ENCODE measurements at regions of chr12 and their contacts with region 1.

Region 1: DNA sequence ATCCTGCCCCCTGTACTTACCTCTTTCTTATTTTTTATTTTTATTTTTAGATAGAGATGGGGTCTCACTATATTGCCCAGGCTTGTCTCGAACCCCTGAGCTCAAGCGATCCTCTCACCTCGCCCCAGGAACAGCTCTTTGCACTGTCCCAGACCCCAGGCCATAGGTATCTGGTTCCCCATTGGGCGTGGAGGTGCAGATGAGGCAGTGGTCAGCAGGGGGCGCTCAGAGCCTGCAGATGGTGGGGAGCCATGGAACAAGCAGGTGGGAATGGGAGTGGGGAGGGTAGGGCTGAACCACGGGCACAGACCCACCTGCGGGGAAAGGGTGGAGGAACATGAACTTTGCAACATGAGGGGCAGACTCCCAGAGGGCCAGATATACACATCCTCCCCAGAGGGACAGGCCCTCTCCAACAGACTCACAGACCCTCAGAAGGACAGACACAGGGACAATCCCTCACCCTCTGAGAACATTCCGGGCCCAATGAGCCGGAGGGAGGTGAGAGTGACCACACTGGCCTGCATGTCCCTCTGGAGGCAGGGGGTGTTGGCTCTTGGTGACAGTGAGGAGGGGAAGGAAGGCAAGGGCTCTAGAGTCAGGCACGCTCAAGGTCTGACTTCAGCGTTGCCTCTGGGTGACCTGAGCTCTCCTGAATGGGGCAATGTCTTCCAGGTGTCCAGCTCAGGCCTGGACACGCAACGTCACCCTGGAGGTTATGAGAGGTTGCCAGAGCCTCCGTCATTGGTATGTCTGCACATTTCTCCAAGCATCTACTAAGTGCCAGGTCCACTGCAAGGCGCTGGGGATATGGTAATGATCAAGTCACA is 34.9 kb downstream of the KRT80 start:
- DNase-seq: peak; percentile 85
- ATAC-seq: peak; percentile 65
- H3K4me3 Mint-ChIP-seq: no peak overlapping the region
- H3K27ac Mint-ChIP-seq: no peak overlapping the region
- H3K4me1 Mint-ChIP-seq: peaks cover 27% of the 10 kb centered on the region
- H3K27me3 Mint-ChIP-seq: no peaks in the 10 kb centered on the region

Region 2: DNA sequence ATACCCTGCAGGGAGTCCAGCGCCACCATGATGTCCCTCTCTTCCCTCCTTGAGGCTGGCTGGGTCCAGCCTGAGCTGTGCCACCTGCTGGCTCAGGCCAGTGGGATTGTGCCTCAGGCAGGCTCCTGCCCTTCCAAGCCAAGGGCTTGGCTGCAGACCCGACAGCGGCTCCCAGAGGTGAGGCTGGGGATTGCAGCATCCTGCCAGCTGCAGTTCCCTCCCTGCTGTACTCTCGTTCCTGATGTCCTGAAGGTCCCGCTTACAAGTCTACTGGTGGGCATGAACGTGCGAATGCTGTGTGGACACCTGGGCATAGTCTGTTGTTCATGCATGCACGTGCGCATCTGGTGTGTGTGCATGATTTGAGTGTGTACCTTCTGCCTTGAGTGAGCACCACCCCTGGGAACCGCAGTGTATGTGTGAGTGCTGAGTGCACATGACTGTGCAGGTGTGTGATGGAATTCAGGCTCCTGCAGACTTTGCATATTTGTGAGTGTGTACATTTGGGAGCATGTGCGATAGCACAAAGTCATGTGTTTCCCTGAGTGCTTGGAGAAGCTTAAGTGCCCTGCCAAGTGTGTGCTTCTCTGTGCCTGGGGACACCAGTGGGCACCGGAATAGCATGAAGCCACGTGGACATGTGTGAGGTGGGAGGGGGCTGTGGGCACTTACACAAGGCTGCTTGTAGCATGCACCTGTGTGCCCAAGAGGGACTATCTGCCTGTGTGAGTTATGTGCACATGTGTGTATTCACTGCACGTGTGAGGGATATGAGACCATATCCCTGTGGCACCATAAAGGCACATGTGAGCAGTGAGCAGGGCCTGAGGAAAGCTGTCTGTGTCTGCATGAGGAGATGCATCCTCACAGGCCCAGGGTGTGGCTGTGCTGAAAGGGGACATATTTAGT is 56.8 kb after region 1 on chr12:
- CTCF ChIA-PET with region 1: interaction called, 4 read pairs
- POLR2A ChIA-PET with region 1: no interaction called
- intact Hi-C with region 1: loop called in 1 of 2 experiments (anchors 2 kb)
- DNase-seq: peak; percentile 82
- ATAC-seq: peak; percentile 90
- H3K4me3 Mint-ChIP-seq: no peak overlapping the region
- H3K27ac Mint-ChIP-seq: no peak overlapping the region
- H3K4me1 Mint-ChIP-seq: no peaks in the 10 kb centered on the region
- H3K27me3 Mint-ChIP-seq: peaks cover 6% of the 10 kb centered on the region

Region 3: DNA sequence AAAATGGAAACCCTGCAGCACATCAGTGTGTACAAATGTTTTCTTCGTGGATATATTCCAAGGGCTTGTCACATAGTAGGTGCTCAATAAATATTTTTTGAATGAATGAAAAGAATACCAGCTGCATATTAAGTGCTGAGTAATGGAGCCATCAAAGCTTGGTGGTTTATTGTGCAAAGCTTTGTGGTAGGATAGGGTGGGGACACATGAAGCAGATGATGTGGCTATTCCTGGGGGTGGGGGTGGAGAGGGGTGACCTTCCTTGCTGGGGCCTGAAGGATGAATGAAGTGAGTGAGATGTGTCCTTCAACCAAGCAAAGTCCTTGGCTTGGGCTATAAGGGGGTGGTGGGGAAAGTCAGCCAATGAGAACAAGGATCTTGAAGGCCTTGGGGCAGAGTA is 138.7 kb after region 1 on chr12:
- CTCF ChIA-PET with region 1: no interaction called
- POLR2A ChIA-PET with region 1: no interaction called
- intact Hi-C with region 1: no loop called
- DNase-seq: no peak
- ATAC-seq: no peak
- H3K4me3 Mint-ChIP-seq: no peak overlapping the region
- H3K27ac Mint-ChIP-seq: no peak overlapping the region
- H3K4me1 Mint-ChIP-seq: no peaks in the 10 kb centered on the region
- H3K27me3 Mint-ChIP-seq: peaks cover 16% of the 10 kb centered on the region

Region 4: DNA sequence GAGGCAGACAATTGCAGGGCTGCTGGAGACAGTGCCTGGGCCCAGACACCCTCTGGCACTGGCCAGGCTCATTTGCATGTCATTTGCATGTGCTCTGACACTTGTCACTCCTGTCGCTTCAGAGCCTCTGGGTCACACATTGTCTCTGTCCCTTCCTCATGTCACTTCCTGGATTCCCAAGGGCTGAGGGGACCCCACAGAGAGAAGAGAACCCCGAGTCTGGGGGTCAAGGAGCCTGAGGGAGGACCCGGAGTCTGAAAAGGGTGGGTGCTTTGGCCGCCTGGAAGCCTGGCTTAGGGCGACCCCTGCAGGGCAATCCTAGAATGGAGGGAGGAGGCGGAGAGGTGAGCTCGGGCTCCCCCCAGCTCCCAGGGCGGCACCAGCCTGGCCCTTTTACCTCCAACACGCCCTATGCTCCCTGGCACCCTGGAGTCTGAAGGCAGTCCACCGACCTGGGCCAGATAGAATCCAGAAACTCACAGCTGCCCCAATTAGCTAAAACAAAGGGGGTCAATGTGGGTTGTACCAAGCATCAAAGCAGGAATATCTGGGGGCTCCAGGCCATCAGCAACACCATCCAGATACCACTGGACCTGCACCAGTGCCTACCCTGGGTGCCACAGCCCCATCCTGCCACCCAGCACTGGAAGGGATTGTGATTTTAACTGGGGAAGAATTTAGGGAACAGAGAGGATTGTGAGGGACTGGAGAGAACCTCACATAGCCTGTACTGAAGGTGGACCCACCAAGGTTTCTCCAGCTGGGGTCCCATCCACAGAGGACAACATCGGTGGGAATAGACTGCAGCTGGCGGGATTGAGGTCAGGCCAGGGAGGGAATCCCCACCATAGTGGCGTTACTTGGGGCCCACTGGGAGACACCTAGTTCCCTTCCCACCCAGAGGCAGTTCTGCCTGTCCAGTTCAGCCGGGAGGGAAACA is 713.7 kb after region 1 on chr12:
- CTCF ChIA-PET with region 1: interaction called, 4 read pairs
- POLR2A ChIA-PET with region 1: no interaction called
- intact Hi-C with region 1: loop called in 1 of 2 experiments (anchors 2 kb)
- DNase-seq: peak; percentile 90
- ATAC-seq: peak; percentile 80
- H3K4me3 Mint-ChIP-seq: no peak overlapping the region
- H3K27ac Mint-ChIP-seq: no peak overlapping the region
- H3K4me1 Mint-ChIP-seq: peaks cover 22% of the 10 kb centered on the region
- H3K27me3 Mint-ChIP-seq: peaks cover 4% of the 10 kb centered on the region

Measured in activated CD4-positive, alpha-beta T cell treated with anti-CD3 and anti-CD28 coated beads for 36 hours (primary cell).